ENCODE measurements at regions of chr14 and their contacts with region 1.

Region 1: DNA sequence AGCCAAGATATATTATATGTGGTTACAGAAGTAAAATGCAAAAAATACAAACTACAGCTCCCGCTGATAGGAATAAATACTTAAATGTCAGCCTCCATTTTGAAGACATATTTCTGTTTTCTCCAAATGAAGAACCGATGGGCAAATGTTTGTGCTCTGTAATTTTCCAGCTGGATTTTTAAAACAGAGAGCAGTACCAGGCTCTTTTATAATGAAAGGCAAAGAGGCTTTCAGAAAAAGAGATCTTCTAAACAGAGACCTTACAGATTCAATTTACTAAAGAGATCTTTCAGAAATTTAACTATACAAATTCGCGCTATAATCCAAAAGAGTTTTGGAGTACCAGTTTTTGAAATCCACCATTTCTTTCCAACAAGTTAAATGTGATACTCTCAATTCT is 19.9 kb downstream of the MAP4K5 start:
- DNase-seq: no peak
- H3K4me3 ChIP-seq: no peak overlapping the region
- H3K27ac ChIP-seq: no peak overlapping the region
- H3K4me1 ChIP-seq: no peaks in the 10 kb centered on the region
- H3K27me3 ChIP-seq: no peaks in the 10 kb centered on the region
- CTCF ChIP-seq: no peak

Region 2: GRCh38 chr14:50263321-50263720 is 249.1 kb before region 1 on chr14:
- CTCF ChIA-PET with region 1: no interaction called
- POLR2A ChIA-PET with region 1: interaction called, 12 read pairs
- intact Hi-C with region 1: no loop called
- DNase-seq: no peak
- H3K4me3 ChIP-seq: no peak overlapping the region
- H3K27ac ChIP-seq: no peak overlapping the region
- H3K4me1 ChIP-seq: no peaks in the 10 kb centered on the region
- H3K27me3 ChIP-seq: no peaks in the 10 kb centered on the region
- CTCF ChIP-seq: no peak